Activated CD4-positive, alpha-beta T cell treated with anti-CD3 and anti-CD28 coated beads for 36 hours (primary cell): ENCODE measurements at regions of chr6 and their contacts with region 1.

Region 1: DNA sequence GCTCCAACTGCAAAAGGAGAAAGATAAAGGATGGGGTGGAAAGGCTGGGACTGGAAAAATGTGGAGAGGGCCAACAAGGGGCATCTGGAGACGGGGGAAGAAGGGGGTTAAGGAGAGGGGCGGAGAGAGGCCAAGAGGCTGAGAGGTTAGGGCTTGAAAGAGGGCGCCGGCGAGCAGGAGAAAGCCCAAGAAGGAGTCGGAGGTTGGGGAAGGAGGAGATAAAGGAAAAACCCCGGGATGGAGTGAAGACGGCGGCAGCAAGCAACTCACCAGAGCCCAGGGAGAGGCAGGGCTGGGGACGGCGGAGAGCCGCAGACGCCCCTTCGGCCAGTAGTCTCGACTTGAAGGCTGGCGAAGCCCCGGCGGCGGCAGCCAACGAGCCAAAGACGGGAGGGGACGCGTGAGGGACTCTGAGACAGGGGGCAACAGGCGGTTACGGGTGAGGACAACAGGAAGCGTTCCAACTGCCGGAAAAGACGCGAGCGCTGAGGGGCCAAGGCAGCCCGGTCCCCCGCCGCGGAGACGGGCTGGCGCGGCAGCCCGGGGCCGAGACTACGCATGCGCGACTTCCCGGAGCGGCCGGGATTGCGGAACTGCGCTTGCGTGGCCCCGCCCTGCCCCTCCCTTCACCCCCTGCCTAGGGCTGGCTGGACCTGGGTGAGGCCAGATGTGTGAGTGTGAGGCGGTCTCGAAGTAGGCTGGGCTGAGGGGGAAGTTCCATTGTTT is at the start of gene STK38:
- DNase-seq: peak; percentile 97
- ATAC-seq: peak; percentile 90
- H3K4me3 Mint-ChIP-seq: peak within 1 kb of the TSS; percentile 94
- H3K27ac Mint-ChIP-seq: peak within 1 kb of the TSS; percentile 97
- H3K4me1 Mint-ChIP-seq: peaks cover 36% of the 10 kb centered on the region
- H3K27me3 Mint-ChIP-seq: no peaks in the 10 kb centered on the region
- total RNA-seq, gene STK38: 24.0 to 27.0 TPM

Region 2: GRCh38 chr6:35739645-35740524 is 807.2 kb before region 1 on chr6:
- CTCF ChIA-PET with region 1: no interaction called
- POLR2A ChIA-PET with region 1: no interaction called
- intact Hi-C with region 1: no loop called
- DNase-seq: no peak
- ATAC-seq: no peak
- H3K4me3 Mint-ChIP-seq: no peak overlapping the region
- H3K27ac Mint-ChIP-seq: no peak overlapping the region
- H3K4me1 Mint-ChIP-seq: peaks cover 24% of the 10 kb centered on the region
- H3K27me3 Mint-ChIP-seq: no peaks in the 10 kb centered on the region

Region 3: GRCh38 chr6:36123257-36124139 is 423.6 kb before region 1 on chr6:
- CTCF ChIA-PET with region 1: no interaction called
- POLR2A ChIA-PET with region 1: no interaction called
- intact Hi-C with region 1: loop called in 1 of 2 experiments (anchors 5 kb)
- DNase-seq: peak; percentile 95
- ATAC-seq: peak; percentile 77
- H3K4me3 Mint-ChIP-seq: peak overlapping the region; percentile 27
- H3K27ac Mint-ChIP-seq: peak overlapping the region; percentile 64
- H3K4me1 Mint-ChIP-seq: peaks cover 89% of the 10 kb centered on the region
- H3K27me3 Mint-ChIP-seq: no peaks in the 10 kb centered on the region

Region 4: GRCh38 chr6:36131511-36132245 is 415.4 kb before region 1 on chr6:
- CTCF ChIA-PET with region 1: no interaction called
- POLR2A ChIA-PET with region 1: no interaction called
- intact Hi-C with region 1: loop called in 1 of 2 experiments (anchors 5 kb)
- DNase-seq: peak; percentile 80
- ATAC-seq: peak; percentile 84
- H3K4me3 Mint-ChIP-seq: peak overlapping the region; percentile 84
- H3K27ac Mint-ChIP-seq: peak overlapping the region; percentile 96
- H3K4me1 Mint-ChIP-seq: peaks cover 55% of the 10 kb centered on the region
- H3K27me3 Mint-ChIP-seq: no peaks in the 10 kb centered on the region

Region 5: GRCh38 chr6:36423101-36423824 is 123.8 kb before region 1 on chr6:
- CTCF ChIA-PET with region 1: interaction called, 4 read pairs
- POLR2A ChIA-PET with region 1: no interaction called
- intact Hi-C with region 1: loop called (anchors 1 kb)
- DNase-seq: peak; percentile 99
- ATAC-seq: peak; percentile 97
- H3K4me3 Mint-ChIP-seq: peak overlapping the region; percentile 83
- H3K27ac Mint-ChIP-seq: peak overlapping the region; percentile 92
- H3K4me1 Mint-ChIP-seq: peaks cover 17% of the 10 kb centered on the region
- H3K27me3 Mint-ChIP-seq: no peaks in the 10 kb centered on the region

Region 6: DNA sequence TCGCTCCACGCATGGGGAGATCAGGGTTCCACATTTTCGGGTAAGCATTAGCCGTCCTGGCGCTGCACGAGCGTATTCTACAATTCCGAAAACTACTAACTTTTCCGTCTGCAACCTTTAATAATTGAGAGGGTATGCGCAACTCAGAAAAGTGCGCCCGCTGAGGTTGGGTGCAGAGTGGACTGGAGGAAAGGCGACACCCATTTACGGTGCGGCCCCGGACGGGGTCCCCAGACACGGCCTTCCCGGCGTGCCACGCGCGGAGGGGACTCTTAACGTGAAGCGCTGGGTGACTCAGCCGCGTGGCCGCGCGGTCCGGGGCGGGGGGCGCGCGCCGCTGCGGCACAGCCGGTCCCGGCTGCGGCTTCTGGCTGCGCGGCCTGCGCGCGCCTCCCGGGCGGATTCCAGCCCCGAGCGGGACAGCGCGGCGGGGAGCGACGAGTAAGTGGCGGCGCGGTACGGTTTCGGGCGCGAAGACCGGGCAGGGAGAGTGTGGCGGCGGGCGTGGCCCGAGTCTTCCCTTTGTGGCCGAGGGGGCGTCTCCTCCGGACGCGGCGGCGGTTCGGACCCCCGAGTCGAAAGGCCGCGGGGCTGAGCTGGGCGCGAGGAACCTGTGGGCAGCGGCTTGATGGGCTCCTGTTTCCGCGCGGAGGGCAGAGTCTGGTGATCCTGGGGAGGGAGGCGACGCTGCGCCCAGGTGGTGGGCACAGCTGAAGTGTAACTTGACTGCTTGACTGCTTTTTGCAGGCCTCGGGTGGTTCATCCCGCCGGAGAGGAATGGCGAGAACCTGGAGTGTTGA is 104.2 kb before region 1 on chr6 and contains the starts of genes KCTD20 and PXT1:
- CTCF ChIA-PET with region 1: interaction called, 3 read pairs
- POLR2A ChIA-PET with region 1: no interaction called
- intact Hi-C with region 1: loop called (anchors 1 to 5 kb)
- DNase-seq: peak; percentile 94
- ATAC-seq: peak; percentile 78
- H3K4me3 Mint-ChIP-seq: peak within 1 kb of the TSS; percentile 95
- H3K27ac Mint-ChIP-seq: peak within 1 kb of the TSS; percentile 97
- H3K4me1 Mint-ChIP-seq: peaks cover 27% of the 10 kb centered on the region
- H3K27me3 Mint-ChIP-seq: no peaks in the 10 kb centered on the region
- total RNA-seq, gene KCTD20: 46.5 to 50.6 TPM
- total RNA-seq, gene PXT1: 0.11 to 0.14 TPM

Region 7: DNA sequence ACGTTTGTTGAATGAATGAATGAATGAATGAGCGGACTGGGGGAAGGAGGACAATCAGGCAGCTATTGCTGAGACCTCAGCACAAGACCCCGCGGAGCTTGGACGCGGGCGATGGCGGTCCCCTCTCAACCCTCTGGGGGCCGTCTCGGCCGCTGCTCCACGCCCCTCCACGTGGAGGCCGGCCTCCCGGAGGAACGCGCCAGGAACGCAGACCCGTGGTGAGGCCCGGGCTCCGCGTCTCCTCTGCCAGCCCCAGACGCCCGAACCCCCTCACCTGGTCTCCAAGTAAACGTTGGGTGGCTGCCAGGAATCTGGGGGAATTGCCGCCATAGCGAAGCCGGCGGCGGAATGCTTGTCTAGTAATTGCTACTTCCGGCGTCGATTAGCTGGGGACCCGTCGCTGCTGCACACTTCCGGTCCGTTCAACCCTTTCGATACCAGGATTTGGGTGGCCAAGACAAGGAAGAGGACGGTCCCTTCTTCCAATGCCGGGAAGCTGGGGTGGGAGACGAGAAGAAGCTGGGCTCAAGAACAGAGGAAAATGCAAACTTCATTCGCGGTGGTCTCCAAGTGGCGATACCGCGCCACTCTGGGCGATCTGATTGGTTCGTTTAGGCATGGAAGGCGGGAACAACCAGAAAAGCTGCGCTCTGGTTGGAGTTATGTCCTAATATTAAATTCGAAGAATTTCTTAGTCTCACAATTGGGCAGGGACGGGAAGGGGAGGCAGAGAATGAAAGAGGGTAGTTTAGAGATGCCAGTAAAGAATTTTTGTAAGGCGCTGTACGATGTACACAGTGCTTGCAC is 327.6 kb after region 1 on chr6 and contains the start of gene PPIL1:
- CTCF ChIA-PET with region 1: no interaction called
- POLR2A ChIA-PET with region 1: no interaction called
- intact Hi-C with region 1: loop called in 1 of 2 experiments (anchors 5 kb)
- DNase-seq: peak; percentile 90
- ATAC-seq: peak; percentile 80
- H3K4me3 Mint-ChIP-seq: peak within 1 kb of the TSS; percentile 98
- H3K27ac Mint-ChIP-seq: peak within 1 kb of the TSS; percentile 99
- H3K4me1 Mint-ChIP-seq: peaks cover 45% of the 10 kb centered on the region
- H3K27me3 Mint-ChIP-seq: peaks cover 7% of the 10 kb centered on the region
- total RNA-seq, gene PPIL1: 45.9 to 46.0 TPM